ENCODE measurements at regions of chr17 and their contacts with region 1.

Region 1: DNA sequence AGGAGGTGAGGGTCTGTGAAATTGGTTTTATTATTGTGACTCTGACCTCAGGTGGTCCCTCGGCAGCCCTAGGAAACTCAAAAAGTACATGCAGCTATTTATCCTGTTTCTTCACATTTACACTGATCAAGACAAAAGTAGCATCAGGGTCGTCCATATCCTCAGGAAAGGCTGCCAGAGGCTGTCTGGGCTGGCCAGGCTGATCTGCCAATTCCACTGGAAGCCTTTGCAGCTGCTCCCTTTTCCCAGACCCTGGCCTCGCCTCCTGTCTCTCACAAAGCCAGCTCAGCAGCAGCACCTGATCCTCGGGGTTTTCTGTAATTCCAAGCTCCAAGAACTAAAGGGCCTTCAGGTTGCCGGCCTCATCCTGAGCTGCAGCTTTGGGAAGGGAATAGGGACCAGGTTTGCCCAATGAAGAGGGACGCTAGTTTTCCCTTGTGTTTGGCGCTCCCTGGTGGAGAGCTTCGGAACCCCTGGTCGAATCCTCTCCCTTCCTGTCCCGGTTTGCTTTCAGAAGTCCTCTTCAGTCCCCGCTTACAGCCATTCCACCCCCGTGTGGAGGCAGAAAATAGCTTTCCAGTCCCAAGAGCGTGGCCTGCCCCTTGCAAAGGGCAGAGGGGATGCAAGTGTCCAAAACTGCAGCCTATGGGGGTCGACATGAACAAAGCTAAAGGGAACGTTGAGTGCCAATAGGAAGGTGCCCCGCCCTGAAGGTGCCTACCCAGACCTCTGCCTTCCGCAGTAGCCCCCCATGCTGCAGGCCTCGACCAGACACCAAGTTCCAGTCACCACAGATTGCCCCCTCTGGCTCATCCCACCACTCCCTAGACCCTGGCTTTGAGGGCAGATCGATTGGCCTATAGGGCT is 13.4 kb downstream of the MFSD6L start:
- DNase-seq: peak; percentile 73
- H3K4me3 Mint-ChIP-seq: no peak overlapping the region
- H3K27ac Mint-ChIP-seq: no peak overlapping the region
- H3K4me1 Mint-ChIP-seq: no peaks in the 10 kb centered on the region
- H3K27me3 Mint-ChIP-seq: no peaks in the 10 kb centered on the region
- CTCF ChIP-seq: peak; percentile 77

Region 2: DNA sequence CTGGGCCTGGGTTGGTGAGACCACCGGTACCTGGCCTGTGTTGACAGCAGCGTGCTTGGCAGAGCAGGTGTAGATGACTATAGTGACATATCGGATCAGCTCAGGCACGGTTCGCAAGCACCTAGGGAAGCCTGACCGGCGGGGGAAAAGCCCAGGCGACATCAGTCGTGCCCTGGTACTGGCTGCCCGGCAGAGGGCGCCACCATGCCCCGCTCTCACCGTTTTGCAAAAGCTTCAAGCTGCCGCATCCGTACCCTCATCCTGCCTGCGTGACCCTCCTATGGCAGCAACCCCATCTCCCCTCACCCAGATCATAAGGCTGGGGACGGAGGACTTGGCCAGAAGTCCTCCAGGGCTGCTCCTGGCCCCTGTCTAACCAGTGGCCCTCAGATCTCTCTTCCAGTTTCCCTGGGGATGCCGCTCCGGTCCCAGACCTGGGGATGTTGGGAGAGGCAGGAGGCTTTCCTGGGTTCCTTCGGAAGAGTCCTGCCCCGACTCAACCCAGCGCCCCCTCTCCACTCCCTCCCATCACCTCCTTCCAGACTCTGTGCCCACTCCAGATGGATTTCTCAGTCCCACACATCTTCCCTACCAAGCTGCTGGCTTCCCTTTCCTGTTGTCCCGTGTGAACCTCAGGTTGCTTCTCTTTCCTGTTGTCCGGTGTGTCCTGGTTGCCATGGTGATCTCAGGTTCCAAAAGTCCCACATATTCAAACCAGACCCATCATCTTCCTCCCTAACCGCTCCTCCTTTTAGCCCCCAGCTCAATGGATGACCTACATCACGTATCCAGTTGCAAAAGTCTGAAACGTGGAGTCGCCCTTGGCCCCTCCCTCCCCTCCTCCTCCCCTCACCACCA is 711.9 kb before region 1 on chr17:
- CTCF ChIA-PET with region 1: interaction called, 4 read pairs
- POLR2A ChIA-PET with region 1: no interaction called
- intact Hi-C with region 1: loop called (anchors 5 kb)
- DNase-seq: peak; percentile 69
- H3K4me3 Mint-ChIP-seq: peak overlapping the region; percentile 52
- H3K27ac Mint-ChIP-seq: no peak overlapping the region
- H3K4me1 Mint-ChIP-seq: peaks cover 19% of the 10 kb centered on the region
- H3K27me3 Mint-ChIP-seq: peaks cover 23% of the 10 kb centered on the region
- CTCF ChIP-seq: peak; percentile 94

Region 3: DNA sequence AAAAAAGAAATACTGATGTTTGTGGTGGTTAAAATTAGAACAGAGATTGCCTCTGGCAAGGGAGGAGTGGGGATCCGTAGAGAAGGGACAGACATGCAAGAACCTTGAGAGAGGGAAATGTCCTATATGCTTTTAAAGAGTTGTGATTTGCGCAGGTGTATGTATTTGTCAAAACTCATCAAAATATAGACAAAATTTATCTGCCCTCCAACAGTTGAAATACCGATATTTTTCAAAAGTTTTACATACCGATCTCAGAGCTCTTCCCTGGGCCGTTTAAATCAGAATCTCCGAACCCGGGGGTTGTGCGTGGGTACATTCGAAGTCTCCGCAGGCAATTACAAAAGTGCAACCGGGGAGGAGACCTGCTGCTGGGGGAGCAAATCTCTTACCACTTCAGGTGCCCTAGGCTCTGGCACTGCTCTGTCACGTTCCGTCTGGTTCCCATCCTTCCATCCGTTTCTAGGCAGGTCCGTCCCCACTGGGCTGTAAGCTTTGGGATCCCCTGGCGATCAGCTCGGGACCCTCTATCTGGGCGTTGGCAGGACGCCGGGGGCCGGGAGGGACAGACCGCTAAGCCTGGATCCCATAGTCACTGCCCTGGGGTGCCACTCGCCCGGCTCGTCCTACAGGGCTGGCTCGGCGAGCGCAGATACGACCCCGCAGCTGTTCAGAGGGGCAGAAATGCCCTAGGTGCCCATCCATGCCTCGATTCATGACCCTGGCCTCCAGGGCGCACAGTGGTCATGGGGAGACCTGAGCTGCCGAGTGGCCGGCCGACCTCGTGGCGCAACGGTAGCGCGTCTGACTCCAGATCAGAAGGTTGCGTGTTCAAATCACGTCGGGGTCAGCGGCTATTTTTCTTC is 600.0 kb before region 1 on chr17:
- CTCF ChIA-PET with region 1: no interaction called
- POLR2A ChIA-PET with region 1: no interaction called
- intact Hi-C with region 1: no loop called
- DNase-seq: peak; percentile 82
- H3K4me3 Mint-ChIP-seq: no peak overlapping the region
- H3K27ac Mint-ChIP-seq: no peak overlapping the region
- H3K4me1 Mint-ChIP-seq: no peaks in the 10 kb centered on the region
- H3K27me3 Mint-ChIP-seq: no peaks in the 10 kb centered on the region
- CTCF ChIP-seq: no peak

Region 4: DNA sequence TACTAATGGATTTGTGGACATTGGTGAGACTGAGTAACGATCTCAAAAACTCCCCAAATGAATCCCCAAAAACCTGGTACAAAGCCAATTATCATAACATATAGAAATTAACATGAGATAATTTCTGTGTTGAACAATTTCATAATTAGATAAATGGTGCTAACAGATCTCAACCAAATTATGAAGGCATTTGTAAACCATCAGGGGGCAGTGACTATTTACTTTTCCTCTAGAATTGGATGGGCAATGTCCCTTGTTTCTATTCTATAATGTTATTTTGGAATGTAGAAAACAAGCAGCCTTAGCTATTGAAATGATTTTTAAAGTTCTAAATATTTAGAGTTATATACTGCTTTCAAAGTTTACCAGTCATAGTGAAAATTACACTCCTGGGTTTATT is 213.0 kb before region 1 on chr17:
- CTCF ChIA-PET with region 1: no interaction called
- POLR2A ChIA-PET with region 1: no interaction called
- intact Hi-C with region 1: loop called (anchors 2 kb)
- DNase-seq: peak; percentile 8
- H3K4me3 Mint-ChIP-seq: no peak overlapping the region
- H3K27ac Mint-ChIP-seq: no peak overlapping the region
- H3K4me1 Mint-ChIP-seq: no peaks in the 10 kb centered on the region
- H3K27me3 Mint-ChIP-seq: no peaks in the 10 kb centered on the region
- CTCF ChIP-seq: peak; percentile 15

Region 5: DNA sequence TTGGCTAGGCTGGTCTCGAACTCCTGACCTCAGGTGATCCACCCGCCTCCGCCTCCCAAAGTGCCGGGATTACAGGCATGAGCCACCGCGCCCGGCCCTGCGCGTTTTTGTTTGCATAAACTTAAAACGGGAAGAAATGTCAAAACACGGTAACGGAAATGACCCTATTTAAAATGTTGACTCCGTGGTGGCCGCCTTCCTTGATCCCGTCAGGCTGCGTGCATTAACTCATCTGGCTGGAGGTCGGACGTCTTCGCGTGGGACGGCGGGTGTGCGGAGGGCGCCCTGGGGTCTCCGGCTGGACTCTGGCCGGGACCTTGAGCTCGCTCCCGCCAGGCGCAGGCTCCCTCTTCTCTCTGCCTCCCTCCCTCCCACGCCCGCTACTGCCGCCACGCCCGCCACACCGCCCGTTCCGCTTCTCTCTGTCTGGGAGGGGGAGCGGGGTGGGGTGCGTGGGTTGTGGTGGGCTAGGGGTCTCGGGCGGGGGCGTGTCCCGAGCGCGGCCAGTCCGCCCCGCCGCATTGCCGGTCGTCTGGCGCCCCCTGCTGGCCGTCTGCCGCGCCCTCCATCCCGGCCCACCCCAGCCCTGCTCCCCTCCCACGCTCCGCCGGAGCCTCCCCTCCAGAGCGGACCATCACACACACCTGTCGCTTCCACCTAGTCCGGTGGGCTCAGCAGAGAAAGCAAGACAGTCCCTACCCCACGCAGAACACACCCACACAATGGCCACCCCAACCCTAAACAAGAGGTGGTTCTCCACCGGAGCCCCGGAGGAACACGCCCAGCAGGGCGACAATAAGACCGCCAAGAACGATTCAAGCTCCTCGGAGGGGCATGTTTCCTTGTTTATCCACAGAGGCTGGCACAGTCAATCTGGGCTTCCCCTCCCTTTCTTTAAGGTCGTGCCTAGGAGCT is 39.9 kb before region 1 on chr17:
- CTCF ChIA-PET with region 1: interaction called, 10 read pairs
- POLR2A ChIA-PET with region 1: no interaction called
- intact Hi-C with region 1: no loop called
- DNase-seq: peak; percentile 48
- H3K4me3 Mint-ChIP-seq: peak overlapping the region; percentile 73
- H3K27ac Mint-ChIP-seq: no peak overlapping the region
- H3K4me1 Mint-ChIP-seq: no peaks in the 10 kb centered on the region
- H3K27me3 Mint-ChIP-seq: no peaks in the 10 kb centered on the region
- CTCF ChIP-seq: peak; percentile 98

Region 6: DNA sequence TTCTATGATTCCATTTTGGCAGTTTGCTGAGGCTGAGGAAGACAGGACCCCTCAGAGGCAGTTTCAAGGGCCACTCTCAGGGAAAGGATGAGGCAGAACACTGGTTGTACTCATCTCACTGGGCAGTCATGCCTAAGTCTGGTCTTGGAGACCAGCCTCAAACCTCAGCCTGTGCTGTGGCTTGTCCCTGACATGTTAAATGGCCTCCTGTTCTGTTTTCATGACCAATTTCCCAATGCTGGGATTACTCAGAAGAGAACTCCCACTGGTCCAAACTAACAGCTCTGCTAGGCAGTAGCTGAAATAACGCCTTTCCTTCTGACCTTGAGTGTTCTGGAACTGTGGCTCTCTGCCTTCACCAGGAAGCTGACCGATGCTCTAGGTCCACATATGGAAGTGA is 19.0 kb before region 1 on chr17:
- CTCF ChIA-PET with region 1: interaction called, 18 read pairs
- POLR2A ChIA-PET with region 1: no interaction called
- intact Hi-C with region 1: no loop called
- DNase-seq: no peak
- H3K4me3 Mint-ChIP-seq: no peak overlapping the region
- H3K27ac Mint-ChIP-seq: no peak overlapping the region
- H3K4me1 Mint-ChIP-seq: no peaks in the 10 kb centered on the region
- H3K27me3 Mint-ChIP-seq: peaks cover 33% of the 10 kb centered on the region
- CTCF ChIP-seq: no peak

Region 7: GRCh38 chr17:8894673-8895578 is 109.1 kb after region 1 on chr17:
- CTCF ChIA-PET with region 1: interaction called, 10 read pairs
- POLR2A ChIA-PET with region 1: no interaction called
- intact Hi-C with region 1: no loop called
- DNase-seq: peak; percentile 60
- H3K4me3 Mint-ChIP-seq: no peak overlapping the region
- H3K27ac Mint-ChIP-seq: no peak overlapping the region
- H3K4me1 Mint-ChIP-seq: no peaks in the 10 kb centered on the region
- H3K27me3 Mint-ChIP-seq: peaks cover 10% of the 10 kb centered on the region
- CTCF ChIP-seq: peak; percentile 53

Region 8: DNA sequence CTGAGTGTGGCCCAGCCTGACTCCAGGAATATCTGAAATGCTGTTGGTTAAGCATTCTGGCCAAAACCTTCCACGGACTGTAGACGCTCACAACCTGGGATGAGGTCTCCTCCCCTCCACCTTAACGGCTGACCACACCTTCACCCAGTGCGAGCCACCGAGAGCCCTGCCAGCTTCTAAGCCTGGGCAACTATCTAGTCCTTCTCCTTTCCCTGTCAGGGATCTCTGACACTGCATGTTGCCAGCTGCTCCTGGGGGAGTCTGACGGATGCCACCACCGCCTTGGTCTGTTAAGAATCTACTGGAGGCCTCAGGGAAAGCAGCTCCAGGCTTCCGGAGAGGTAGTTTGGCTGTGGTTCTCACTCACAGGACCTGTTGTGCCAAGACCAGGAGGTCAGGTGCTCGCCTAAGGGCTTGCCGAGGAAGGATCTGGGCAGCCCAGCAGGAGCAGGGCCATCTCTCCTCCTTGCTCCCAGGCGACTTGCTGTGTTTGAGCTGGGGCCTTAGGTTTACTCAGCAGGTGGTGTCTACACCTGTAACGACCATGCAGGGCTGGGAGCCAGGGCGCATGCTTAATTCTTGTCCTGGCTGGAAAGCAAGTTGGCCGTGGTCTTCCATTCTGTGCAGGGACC is 347.3 kb after region 1 on chr17:
- CTCF ChIA-PET with region 1: no interaction called
- POLR2A ChIA-PET with region 1: no interaction called
- intact Hi-C with region 1: no loop called
- DNase-seq: no peak
- H3K4me3 Mint-ChIP-seq: no peak overlapping the region
- H3K27ac Mint-ChIP-seq: no peak overlapping the region
- H3K4me1 Mint-ChIP-seq: no peaks in the 10 kb centered on the region
- H3K27me3 Mint-ChIP-seq: no peaks in the 10 kb centered on the region
- CTCF ChIP-seq: no peak

Measured in MCF 10A (cell line).